ENCODE measurements at regions of chr3 and their contacts with region 1.

Region 1: DNA sequence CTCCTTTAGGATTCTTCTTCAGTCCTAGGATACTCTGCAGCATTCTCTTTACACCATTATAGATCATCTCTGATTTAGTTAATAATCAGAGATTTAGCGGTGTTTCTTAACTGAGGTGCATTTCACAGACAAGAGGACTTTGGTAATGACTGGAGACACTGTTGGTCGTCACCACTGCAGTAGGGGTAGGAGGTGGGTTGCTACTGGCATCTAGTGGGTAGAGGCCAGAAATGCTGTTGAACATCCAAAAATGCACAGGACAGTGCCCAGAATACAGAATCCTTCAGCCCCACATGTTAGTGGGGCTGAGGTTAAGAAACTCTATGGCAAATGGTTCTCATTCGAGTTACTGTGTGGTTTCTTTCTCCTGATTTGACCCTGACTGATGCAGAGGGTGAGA is 80.4 kb upstream of the LMCD1 start:
- DNase-seq: no peak
- H3K4me3 ChIP-seq: no peak overlapping the region
- H3K27ac ChIP-seq: no peak overlapping the region
- H3K4me1 ChIP-seq: peaks cover 0 to 5% (median 2%) of the 10 kb centered on the region in 3 donors
- H3K27me3 ChIP-seq: no peaks in the 10 kb centered on the region
- CTCF ChIP-seq: no peak

Region 2: GRCh38 chr3:7999384-7999783 is 421.9 kb before region 1 on chr3:
- intact Hi-C with region 1: no loop called
- DNase-seq: peak in 3 of 5 donors; percentile 27 to 62 (median 32)
- H3K4me3 ChIP-seq: no peak overlapping the region
- H3K27ac ChIP-seq: no peak overlapping the region
- H3K4me1 ChIP-seq: no peaks in the 10 kb centered on the region
- H3K27me3 ChIP-seq: no peaks in the 10 kb centered on the region
- CTCF ChIP-seq: no peak

Region 3: GRCh38 chr3:8607234-8608040 is 186.2 kb after region 1 on chr3:
- intact Hi-C with region 1: loop called (anchors 10 kb)
- DNase-seq: peak; percentile 71 to 88 (median 71)
- H3K4me3 ChIP-seq: no peak overlapping the region
- H3K27ac ChIP-seq: no peak overlapping the region
- H3K4me1 ChIP-seq: no peaks in the 10 kb centered on the region
- H3K27me3 ChIP-seq: no peaks in the 10 kb centered on the region
- CTCF ChIP-seq: peak; percentile 59